HEK293 (cell line): ENCODE measurements at regions of chr5 and their contacts with region 1.

Region 1: GRCh38 chr5:16552666-16553343 is 64.0 kb downstream of the RETREG1 start:
- H3K4me3 ChIP-seq: no peak overlapping the region
- H3K27ac ChIP-seq: no peak overlapping the region
- H3K4me1 ChIP-seq: no peaks in the 10 kb centered on the region
- CTCF ChIP-seq: peak; percentile 69

Region 2: DNA sequence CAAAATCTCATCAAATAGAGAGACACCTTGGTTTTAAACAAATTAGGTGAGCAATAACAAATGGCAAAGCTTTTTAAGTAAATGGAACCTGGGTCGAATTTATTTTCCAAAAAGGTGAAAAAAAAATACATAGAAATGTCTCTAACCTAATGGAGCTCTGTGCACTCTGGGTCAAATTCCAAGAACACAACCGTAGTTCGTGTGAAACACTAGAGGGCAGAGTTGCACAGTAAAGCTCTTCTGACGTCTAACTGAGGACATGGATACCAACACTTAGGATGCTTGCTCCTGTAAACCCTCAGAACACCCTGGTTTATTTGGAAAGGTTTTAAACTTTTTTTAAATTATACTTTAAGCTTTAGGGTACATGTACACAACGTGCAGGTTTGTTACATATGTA is 392.1 kb before region 1 on chr5:
- CTCF ChIA-PET with region 1: interaction called, 31 read pairs
- POLR2A ChIA-PET with region 1: no interaction called
- H3K4me3 ChIP-seq: no peak overlapping the region
- H3K27ac ChIP-seq: no peak overlapping the region
- H3K4me1 ChIP-seq: no peaks in the 10 kb centered on the region
- CTCF ChIP-seq: no peak

Region 3: DNA sequence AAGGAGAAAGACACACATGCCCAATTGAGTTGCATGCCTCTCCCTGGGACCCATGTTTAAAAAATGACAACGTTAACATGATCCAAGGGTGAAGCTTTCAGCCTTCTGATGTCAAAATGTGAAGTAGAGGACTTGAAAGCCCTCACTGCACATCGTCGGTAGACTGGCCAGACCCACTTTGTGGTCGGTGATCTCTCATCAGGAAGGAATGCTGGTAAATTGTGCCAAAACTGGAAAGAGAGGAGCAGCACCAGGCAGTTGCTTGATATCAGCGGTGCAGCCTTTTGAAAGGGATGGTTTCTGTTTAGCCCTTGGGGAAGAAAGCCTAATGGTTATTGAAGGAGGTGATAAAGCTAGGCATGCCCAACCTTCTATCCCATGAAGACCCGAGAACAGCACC is 248.0 kb before region 1 on chr5:
- CTCF ChIA-PET with region 1: no interaction called
- POLR2A ChIA-PET with region 1: no interaction called
- H3K4me3 ChIP-seq: no peak overlapping the region
- H3K27ac ChIP-seq: no peak overlapping the region
- H3K4me1 ChIP-seq: no peaks in the 10 kb centered on the region
- CTCF ChIP-seq: no peak

Region 4: GRCh38 chr5:16483361-16483760 is 69.4 kb before region 1 on chr5:
- CTCF ChIA-PET with region 1: interaction called, 15 read pairs
- POLR2A ChIA-PET with region 1: no interaction called
- H3K4me3 ChIP-seq: no peak overlapping the region
- H3K27ac ChIP-seq: no peak overlapping the region
- H3K4me1 ChIP-seq: peaks cover 5% of the 10 kb centered on the region; the same call in 1 of the 2 replicates
- CTCF ChIP-seq: no peak

Region 5: DNA sequence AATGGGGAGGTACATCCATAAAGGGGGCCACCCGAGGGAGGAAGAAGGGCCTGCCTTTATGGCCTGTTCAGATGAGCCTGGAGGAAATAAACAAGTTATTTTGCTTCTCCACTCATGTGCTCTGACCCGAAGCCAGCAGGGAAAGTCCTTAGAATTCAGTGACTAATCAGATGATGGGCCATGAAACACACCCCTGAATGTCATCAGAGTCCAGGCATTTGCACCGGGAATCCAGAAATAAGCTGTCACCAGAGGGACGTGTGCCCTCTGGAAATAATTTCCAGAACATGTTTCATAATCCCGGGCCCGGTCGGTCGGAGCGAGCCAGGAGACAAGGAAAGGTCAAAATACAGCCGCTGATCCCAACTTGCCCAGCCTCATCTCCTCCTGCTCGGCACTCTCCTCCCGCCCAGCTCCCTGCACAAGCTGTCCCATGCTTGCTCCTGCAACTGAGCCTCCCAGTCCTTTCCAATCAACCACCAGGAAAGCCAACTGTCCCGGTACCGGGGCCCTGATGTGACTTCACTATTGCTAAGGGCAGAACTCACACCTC is 13.6 kb before region 1 on chr5:
- CTCF ChIA-PET with region 1: interaction called, 25 read pairs
- POLR2A ChIA-PET with region 1: no interaction called
- H3K4me3 ChIP-seq: no peak overlapping the region
- H3K27ac ChIP-seq: no peak overlapping the region
- H3K4me1 ChIP-seq: no peaks in the 10 kb centered on the region
- CTCF ChIP-seq: no peak

Region 6: DNA sequence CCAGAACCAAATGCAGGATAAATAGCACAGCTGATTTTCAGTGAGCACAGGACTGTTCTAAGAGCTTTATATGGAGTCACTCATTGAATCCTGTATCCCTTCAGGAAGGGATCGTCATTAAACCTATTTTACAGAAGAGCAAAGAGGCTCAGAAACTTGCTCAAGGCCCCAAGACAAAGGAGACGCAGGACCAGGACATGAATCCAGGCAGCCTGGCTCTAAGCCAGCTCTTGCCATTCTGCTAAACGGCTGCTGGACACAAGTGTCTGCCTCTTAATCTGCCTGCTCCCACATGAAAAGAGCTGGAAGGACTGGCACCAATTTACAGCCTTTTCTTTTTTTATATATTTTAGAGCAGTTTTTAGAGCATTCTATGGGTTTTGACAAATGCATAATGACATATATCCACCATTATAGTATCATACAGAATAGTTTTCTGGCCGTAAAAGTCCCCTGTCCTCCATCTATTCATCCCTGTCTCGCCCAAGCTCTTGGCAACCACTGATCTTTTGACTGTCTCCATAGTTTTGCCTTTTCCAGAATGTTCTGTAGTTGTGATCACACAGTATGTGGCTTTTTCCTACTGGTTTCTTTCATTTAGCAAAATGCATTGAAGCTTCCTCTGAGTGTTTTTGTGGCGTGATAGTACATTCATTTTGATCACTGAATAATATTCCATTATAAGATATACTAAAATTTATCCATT is 26.5 kb after region 1 on chr5:
- CTCF ChIA-PET with region 1: interaction called, 11 read pairs
- POLR2A ChIA-PET with region 1: no interaction called
- H3K4me3 ChIP-seq: no peak overlapping the region
- H3K27ac ChIP-seq: no peak overlapping the region
- H3K4me1 ChIP-seq: no peaks in the 10 kb centered on the region
- CTCF ChIP-seq: no peak

Region 7: GRCh38 chr5:16707168-16707868 is 154.5 kb after region 1 on chr5:
- CTCF ChIA-PET with region 1: no interaction called
- POLR2A ChIA-PET with region 1: no interaction called
- H3K4me3 ChIP-seq: no peak overlapping the region
- H3K27ac ChIP-seq: no peak overlapping the region
- H3K4me1 ChIP-seq: peaks cover 3% of the 10 kb centered on the region
- CTCF ChIP-seq: no peak